Posterior cingulate gyrus (tissue), 11 donors: ENCODE measurements at regions of chr15 and their contacts with region 1.

Region 1: GRCh38 chr15:32659340-32660155 is 18.0 kb downstream of the SCG5 start:
- DNase-seq: no peak

Region 2: DNA sequence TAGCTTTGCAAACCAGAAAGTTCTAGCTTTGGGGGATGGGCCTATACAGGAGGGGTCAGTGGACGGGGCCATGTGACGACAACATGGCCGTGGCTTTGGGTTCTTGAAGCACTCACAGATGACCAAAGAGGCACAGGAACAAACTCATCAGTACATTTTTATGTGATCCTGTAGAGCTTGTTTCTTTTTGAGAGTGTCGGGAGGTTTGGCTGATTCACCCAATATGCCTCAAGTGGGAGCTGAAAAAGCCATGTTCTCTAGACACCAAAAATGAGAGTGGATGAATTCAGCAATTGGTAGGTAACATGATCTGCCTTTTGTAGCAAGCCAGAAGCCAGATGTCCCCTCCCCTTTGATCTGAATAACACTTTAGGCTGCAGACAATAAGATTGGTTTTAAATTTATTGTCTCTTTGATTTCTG is 88.4 kb after region 1 on chr15:
- intact Hi-C with region 1: no loop called
- DNase-seq: no peak

Region 3: GRCh38 chr15:32936283-32936918 is 276.9 kb after region 1 on chr15:
- intact Hi-C with region 1: loop called (anchors 5 kb)
- DNase-seq: no peak

Region 4: DNA sequence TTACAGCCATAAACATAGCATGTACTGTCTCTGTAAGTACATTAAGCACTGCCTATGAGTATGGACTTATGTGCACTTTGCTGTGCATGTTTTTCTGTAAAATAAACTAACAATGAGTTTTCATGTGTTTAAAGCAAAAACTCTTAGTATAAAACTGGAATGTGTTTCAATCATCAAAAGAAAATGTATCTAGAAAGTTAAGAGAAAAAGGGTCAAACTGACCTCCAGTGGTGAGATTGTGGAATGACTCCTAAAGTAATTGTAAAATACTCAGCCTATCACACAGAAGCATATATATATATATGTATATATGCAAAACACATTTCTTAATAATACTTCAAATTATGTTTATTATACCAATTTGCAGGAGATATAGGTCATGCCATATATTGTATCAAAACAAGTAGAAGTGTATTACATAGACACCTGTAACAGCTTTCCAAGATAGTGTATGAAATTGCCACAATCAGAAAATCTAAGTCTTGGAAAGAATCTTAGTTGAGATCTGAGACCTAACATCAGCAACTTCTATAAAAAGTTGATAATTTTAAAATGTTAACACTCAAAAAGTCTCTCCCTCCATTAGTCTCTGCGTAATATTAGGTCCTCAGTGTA is 335.4 kb after region 1 on chr15:
- intact Hi-C with region 1: loop called (anchors 2 kb)
- DNase-seq: no peak